ENCODE measurements at regions of chr1 and their contacts with region 1.

Region 1: GRCh38 chr1:111222308-111223125 is 5.0 kb upstream of the CHI3L2 start:
- DNase-seq: peak; percentile 40 to 88 (median 81)
- ATAC-seq: peak; percentile 89 to 96 (median 92)
- H3K4me3 ChIP-seq: no peak overlapping the region
- H3K27ac ChIP-seq: no peak overlapping the region
- H3K4me1 ChIP-seq: peaks cover 0 to 8% (median 7%) of the 10 kb centered on the region in 3 donors
- H3K27me3 ChIP-seq: no peaks in the 10 kb centered on the region
- CTCF ChIP-seq: peak; percentile 71 to 86 (median 77)

Region 2: DNA sequence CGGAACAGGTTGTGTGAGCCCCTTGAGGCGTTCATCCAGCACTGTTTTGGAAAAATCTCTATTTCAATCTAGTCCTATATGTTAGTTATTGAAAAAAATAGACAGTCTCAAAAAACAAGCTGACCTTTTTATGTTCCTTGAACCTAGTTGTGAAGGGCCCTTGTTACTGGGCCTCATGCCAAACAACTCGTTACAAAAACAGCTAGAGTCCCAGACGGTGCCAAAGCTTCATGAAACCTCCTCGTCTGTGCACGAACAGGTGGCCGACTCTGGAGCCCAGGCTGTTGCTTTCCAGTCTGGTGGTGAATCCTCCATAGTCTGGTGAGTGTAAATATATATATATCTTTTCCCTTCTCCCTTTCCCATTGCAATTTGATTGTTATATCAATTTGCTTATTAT is 68.1 kb after region 1 on chr1 and contains the start of gene CHIA:
- intact Hi-C with region 1: no loop called
- DNase-seq: peak in 1 of 6 donors; percentile 13
- ATAC-seq: peak in 2 of 4 donors; percentile 41 to 51
- H3K4me3 ChIP-seq: no peak within 1 kb of the TSS
- H3K27ac ChIP-seq: no peak within 1 kb of the TSS
- H3K4me1 ChIP-seq: no peaks in the 10 kb centered on the region
- H3K27me3 ChIP-seq: no peaks in the 10 kb centered on the region
- CTCF ChIP-seq: no peak
- total RNA-seq, gene CHIA: not detected

Region 3: GRCh38 chr1:111399792-111400610 is 177.5 kb after region 1 on chr1:
- intact Hi-C with region 1: loop called in 2 of 3 experiments (anchors 5 kb)
- DNase-seq: peak in 3 of 6 donors; percentile 27 to 65 (median 28)
- ATAC-seq: peak in 3 of 4 donors; percentile 63 to 76 (median 71)
- H3K4me3 ChIP-seq: no peak overlapping the region
- H3K27ac ChIP-seq: no peak overlapping the region
- H3K4me1 ChIP-seq: no peaks in the 10 kb centered on the region
- H3K27me3 ChIP-seq: peaks cover 0 to 5% (median 2%) of the 10 kb centered on the region in 4 donors
- CTCF ChIP-seq: peak; percentile 45 to 62 (median 60)

Region 4: GRCh38 chr1:111463029-111463683 is 240.6 kb after region 1 on chr1:
- intact Hi-C with region 1: no loop called
- DNase-seq: peak in 3 of 6 donors; percentile 51 to 58 (median 56)
- ATAC-seq: peak; percentile 64 to 85 (median 72)
- H3K4me3 ChIP-seq: no peak overlapping the region
- H3K27ac ChIP-seq: peak overlapping the region in 2 of 4 donors; percentile 15 to 51
- H3K4me1 ChIP-seq: peaks cover 6 to 23% (median 19%) of the 10 kb centered on the region in 3 donors
- H3K27me3 ChIP-seq: no peaks in the 10 kb centered on the region
- CTCF ChIP-seq: no peak

Measured in pancreas (tissue), 10 donors.